CD4-positive, alpha-beta memory T cell (primary cell): ENCODE measurements at regions of chr1 and their contacts with region 1.

Region 1: DNA sequence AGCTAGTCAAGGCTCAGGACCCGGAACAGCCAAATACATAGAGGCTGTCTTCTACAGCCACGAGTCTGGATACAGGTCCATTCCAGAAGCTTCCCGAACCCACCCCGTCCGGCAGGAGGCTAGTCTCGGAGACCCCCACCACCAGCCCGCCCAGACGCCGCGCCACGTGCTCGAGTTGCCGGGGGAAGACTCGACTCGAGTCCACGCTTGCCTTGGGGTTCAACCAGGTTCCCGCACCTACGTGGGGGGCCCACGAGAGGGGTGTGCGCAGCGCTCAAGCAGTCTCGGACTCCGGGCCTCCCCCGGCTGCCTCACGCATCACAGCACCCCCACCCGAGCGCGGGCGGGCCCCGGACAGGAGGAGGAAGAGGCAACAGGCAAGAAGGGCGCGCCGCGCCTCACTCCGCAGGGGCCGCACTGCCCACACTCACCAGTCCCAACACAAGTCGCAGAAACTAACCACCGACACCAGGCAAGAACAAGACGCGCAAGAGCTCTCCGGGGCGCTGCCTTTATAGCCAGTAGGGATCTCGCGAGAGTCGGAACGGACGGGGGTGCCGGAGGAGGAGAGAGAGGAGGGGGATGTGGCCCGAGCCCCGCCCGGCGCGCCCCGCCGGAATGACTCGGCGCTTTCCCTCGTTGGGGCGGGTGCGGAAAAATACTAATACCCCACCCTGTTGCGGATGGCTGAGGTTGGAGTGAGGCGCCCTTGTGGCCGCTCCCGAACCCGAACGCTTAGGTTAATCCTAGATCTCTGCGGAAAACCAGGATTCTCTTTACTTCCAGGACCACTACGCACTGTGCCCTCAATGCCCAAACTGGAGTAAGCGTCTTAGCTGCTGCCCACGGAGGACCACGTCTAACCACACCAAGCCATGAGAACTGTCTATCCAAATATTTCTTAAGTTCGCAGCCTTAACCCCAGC is at the start of gene PRDX1:
- DNase-seq: peak; percentile 95
- H3K4me3 ChIP-seq: peak within 1 kb of the TSS; percentile 90 to 94
- H3K4me3 Mint-ChIP-seq: peak within 1 kb of the TSS; percentile 93 to 97 (median 96)
- H3K27ac ChIP-seq: peak within 1 kb of the TSS; percentile 87
- H3K27ac Mint-ChIP-seq: peak within 1 kb of the TSS; percentile 85 to 97 (median 93)
- H3K4me1 ChIP-seq: peaks cover 25% of the 10 kb centered on the region
- H3K4me1 Mint-ChIP-seq: peaks cover 17 to 41% (median 29%) of the 10 kb centered on the region in 4 donors
- H3K27me3 ChIP-seq: no peaks in the 10 kb centered on the region
- H3K27me3 Mint-ChIP-seq: no peaks in the 10 kb centered on the region
- total RNA-seq, gene PRDX1: 130 to 145 TPM

Region 2: DNA sequence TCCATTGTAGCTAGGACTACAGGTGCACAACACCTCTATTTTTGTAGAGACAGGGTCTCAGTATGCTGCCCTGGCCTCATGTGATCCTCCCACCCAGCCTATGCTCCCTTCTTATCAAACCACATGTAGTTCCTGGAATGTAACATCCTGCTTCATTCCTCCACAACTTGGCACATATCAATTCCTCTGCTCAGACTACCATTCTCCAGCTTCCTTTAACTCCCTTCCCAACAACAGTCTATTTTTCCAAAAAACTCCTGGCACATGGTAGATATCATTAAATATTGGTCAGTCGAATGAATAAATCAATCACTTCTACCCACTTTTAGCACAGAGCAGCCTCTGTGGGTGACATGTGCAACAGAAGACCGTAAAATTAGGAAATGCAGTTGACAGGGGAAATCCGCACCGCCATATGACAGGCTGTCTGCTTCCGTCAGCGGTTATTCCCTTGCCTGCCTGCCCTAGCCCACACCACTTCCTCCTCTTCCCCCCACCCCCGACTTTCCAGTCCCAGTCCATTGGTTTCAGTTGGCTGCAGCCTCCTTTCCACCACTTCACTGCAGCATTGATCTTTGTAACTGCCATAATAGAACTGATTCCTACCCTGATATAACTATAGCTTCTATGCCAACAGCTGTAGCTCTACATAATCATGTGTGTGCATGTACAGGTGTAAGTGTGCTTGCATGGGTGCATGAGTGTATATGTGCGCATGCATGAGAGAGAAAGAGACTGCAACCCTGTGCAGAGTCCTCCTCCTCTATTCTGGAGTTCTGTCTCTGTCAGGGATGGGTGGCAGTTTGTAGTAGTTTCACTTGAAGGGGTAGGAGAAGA is 22.1 kb after region 1 on chr1:
- CTCF ChIA-PET with region 1: interaction called, 4 read pairs
- POLR2A ChIA-PET with region 1: interaction called, 46 read pairs
- intact Hi-C with region 1: loop called (anchors 2 kb)
- DNase-seq: peak; percentile 73 to 93 (median 74)
- H3K4me3 ChIP-seq: peak overlapping the region in 1 of 2 donors; percentile 25
- H3K4me3 Mint-ChIP-seq: peak overlapping the region; percentile 26 to 87 (median 74)
- H3K27ac ChIP-seq: peak overlapping the region; percentile 55
- H3K27ac Mint-ChIP-seq: peak overlapping the region; percentile 75 to 98 (median 95)
- H3K4me1 ChIP-seq: peaks cover 31% of the 10 kb centered on the region
- H3K4me1 Mint-ChIP-seq: peaks cover 21 to 36% (median 28%) of the 10 kb centered on the region in 4 donors
- H3K27me3 ChIP-seq: no peaks in the 10 kb centered on the region
- H3K27me3 Mint-ChIP-seq: no peaks in the 10 kb centered on the region

Region 3: GRCh38 chr1:45557422-45557944 is 35.8 kb after region 1 on chr1:
- CTCF ChIA-PET with region 1: interaction called, 3 read pairs
- POLR2A ChIA-PET with region 1: interaction called, 12 read pairs
- intact Hi-C with region 1: no loop called
- DNase-seq: no peak
- H3K4me3 ChIP-seq: no peak overlapping the region
- H3K4me3 Mint-ChIP-seq: no peak overlapping the region
- H3K27ac ChIP-seq: no peak overlapping the region
- H3K27ac Mint-ChIP-seq: peak overlapping the region in 2 of 7 donors; percentile 1 to 35
- H3K4me1 ChIP-seq: peaks cover 3% of the 10 kb centered on the region
- H3K4me1 Mint-ChIP-seq: peaks cover 7 to 12% (median 9%) of the 10 kb centered on the region in 4 donors
- H3K27me3 ChIP-seq: no peaks in the 10 kb centered on the region
- H3K27me3 Mint-ChIP-seq: no peaks in the 10 kb centered on the region

Region 4: DNA sequence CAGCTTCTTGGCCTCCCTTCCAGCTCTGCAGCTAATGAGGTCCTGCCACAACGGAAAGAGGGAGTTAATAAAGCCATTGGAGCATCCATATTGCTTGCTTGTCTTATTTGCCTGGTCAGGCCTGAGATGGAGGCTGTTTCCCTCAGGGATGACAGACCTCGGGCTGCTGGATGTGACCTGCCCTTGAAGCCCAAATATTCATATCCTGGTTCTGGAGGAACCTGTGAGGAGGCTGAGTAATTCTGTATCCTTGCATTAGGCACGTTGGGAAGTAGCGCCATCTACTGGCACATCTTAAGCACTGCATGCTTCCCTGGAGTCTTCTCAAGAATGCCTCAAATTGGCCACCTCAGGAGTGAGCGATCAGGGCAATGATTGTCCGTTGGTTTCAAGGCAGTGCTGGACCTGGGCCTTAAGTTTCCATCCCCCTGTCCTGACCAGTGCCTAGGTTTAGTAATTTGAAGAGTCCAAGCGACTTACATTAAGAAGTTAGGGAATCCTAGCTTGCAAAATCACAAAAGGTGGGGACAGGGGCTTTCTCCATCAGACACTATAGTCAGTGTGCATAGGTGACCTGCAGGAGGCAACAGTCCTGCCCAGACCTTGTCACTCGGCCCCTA is 48.4 kb after region 1 on chr1:
- CTCF ChIA-PET with region 1: interaction called, 74 read pairs
- POLR2A ChIA-PET with region 1: interaction called, 14 read pairs
- intact Hi-C with region 1: loop called (anchors 2 kb)
- DNase-seq: peak; percentile 67 to 73 (median 72)
- H3K4me3 ChIP-seq: no peak overlapping the region
- H3K4me3 Mint-ChIP-seq: no peak overlapping the region
- H3K27ac ChIP-seq: no peak overlapping the region
- H3K27ac Mint-ChIP-seq: peak overlapping the region in 6 of 7 donors; percentile 28 to 88 (median 54)
- H3K4me1 ChIP-seq: no peaks in the 10 kb centered on the region
- H3K4me1 Mint-ChIP-seq: peaks cover 0 to 3% (median 0%) of the 10 kb centered on the region in 4 donors
- H3K27me3 ChIP-seq: no peaks in the 10 kb centered on the region
- H3K27me3 Mint-ChIP-seq: no peaks in the 10 kb centered on the region

Region 5: GRCh38 chr1:45750298-45751038 is 228.8 kb after region 1 on chr1 and contains the start of gene IPP:
- CTCF ChIA-PET with region 1: interaction called, 3 read pairs
- POLR2A ChIA-PET with region 1: interaction called, 4 read pairs
- intact Hi-C with region 1: loop called (anchors 5 kb)
- DNase-seq: peak; percentile 89 to 92 (median 90)
- H3K4me3 ChIP-seq: peak within 1 kb of the TSS; percentile 84 to 86
- H3K4me3 Mint-ChIP-seq: peak within 1 kb of the TSS; percentile 94 to 100 (median 98)
- H3K27ac ChIP-seq: peak within 1 kb of the TSS; percentile 93
- H3K27ac Mint-ChIP-seq: peak within 1 kb of the TSS; percentile 98 to 100 (median 99)
- H3K4me1 ChIP-seq: peaks cover 22% of the 10 kb centered on the region
- H3K4me1 Mint-ChIP-seq: peaks cover 15 to 44% (median 30%) of the 10 kb centered on the region in 4 donors
- H3K27me3 ChIP-seq: no peaks in the 10 kb centered on the region
- H3K27me3 Mint-ChIP-seq: no peaks in the 10 kb centered on the region
- total RNA-seq, gene IPP: 17.3 to 19.7 TPM

Region 6: DNA sequence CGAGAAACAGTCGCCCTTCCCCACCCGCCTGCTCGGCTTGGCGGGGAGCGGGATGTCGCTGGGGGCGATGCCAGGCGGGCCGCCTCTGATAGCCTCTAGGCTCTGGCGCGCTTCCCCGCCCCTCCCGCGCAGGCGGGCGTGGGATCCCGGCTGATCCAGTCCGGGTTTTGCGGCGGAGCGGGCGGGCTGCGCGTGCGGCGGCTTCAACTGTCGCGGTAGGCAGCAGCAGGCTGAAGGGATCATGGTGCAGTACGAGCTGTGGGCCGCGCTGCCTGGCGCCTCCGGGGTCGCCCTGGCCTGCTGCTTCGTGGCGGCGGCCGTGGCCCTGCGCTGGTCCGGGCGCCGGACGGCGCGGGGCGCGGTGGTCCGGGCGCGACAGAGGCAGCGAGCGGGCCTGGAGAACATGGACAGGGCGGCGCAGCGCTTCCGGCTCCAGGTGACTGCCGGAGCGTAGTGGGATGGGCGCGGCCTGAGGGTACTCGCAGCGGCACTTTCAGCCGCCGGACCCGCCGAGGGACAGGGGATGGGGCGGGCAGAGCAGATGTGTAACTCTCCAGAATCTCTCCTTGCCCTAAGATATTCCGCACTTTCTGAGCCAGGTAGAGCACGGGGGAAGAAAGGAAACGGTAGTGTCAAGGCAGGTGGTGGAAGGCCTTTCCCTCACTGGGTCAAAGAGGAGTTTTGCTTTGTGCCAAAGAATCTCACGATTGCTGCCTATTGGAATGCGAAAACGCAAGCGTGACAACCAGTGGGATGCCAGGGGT is 872.6 kb after region 1 on chr1 and contains the start of gene FAAH:
- CTCF ChIA-PET with region 1: no interaction called
- POLR2A ChIA-PET with region 1: no interaction called
- intact Hi-C with region 1: no loop called
- DNase-seq: peak in 4 of 5 donors; percentile 22 to 42 (median 36)
- H3K4me3 ChIP-seq: peak within 1 kb of the TSS in 1 of 2 donors; percentile 32
- H3K4me3 Mint-ChIP-seq: peak within 1 kb of the TSS; percentile 38 to 83 (median 75)
- H3K27ac ChIP-seq: no peak within 1 kb of the TSS
- H3K27ac Mint-ChIP-seq: peak within 1 kb of the TSS in 3 of 7 donors; percentile 2 to 30 (median 10)
- H3K4me1 ChIP-seq: no peaks in the 10 kb centered on the region
- H3K4me1 Mint-ChIP-seq: peaks cover 4 to 18% (median 6%) of the 10 kb centered on the region in 4 donors
- H3K27me3 ChIP-seq: no peaks in the 10 kb centered on the region
- H3K27me3 Mint-ChIP-seq: peaks cover 12 to 14% of the 10 kb centered on the region in 2 donors
- total RNA-seq, gene FAAH: 7.7 to 10.7 TPM